PC-3 (cell line): ENCODE measurements at regions of chr21 and their contacts with region 1.

Region 1: GRCh38 chr21:35882791-35883240 is 177.5 kb downstream of the SETD4 start:
- DNase-seq: no peak
- ATAC-seq: no peak
- H3K4me3 ChIP-seq: no peak overlapping the region
- H3K27ac ChIP-seq: no peak overlapping the region
- H3K4me1 ChIP-seq: no peaks in the 10 kb centered on the region
- H3K27me3 ChIP-seq: peaks cover 38% of the 10 kb centered on the region
- CTCF ChIP-seq: no peak

Region 2: DNA sequence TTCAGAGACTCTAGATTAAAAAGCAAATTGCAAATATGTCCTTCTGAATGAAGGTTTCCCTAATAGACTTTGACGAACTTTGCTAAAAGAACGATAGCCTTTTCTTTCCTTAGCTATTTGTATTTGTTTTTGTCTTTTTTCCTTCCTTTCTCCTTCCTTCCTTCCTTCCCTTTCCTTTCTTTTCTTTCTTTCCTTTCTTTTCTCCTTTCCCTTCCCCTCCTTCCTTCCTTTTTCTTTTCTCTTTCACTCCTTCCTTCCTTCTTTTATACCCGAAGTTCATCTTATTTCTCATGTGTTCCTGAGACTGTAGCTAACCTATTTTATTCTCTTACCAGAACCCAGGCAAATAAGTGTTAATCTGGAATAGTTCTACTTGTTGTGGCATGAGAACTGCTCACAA is 452.6 kb before region 1 on chr21:
- CTCF ChIA-PET with region 1: interaction called, 13 read pairs
- POLR2A ChIA-PET with region 1: no interaction called
- intact Hi-C with region 1: no loop called
- DNase-seq: no peak
- ATAC-seq: no peak
- H3K4me3 ChIP-seq: no peak overlapping the region
- H3K27ac ChIP-seq: no peak overlapping the region
- H3K4me1 ChIP-seq: no peaks in the 10 kb centered on the region
- H3K27me3 ChIP-seq: no peaks in the 10 kb centered on the region
- CTCF ChIP-seq: no peak

Region 3: DNA sequence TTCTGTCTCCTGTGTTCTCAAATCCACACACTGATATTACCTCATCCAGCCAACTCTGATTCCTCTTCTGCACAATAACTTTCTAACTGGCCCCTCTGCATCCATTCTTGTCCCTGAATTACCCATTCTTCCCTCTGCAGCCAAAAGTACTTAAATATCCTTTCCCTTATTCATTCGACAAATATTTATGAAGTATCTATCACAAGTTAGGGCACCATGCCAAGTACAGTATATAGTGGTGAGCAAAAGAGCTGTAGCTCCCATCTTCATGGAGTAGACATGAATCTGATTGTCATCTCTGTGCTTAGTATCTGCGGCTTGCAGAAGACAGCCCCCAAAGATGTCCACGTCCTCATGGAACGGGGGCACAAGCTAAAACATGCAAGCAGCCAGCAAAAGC is 139.2 kb before region 1 on chr21:
- CTCF ChIA-PET with region 1: no interaction called
- POLR2A ChIA-PET with region 1: no interaction called
- intact Hi-C with region 1: no loop called
- DNase-seq: peak; percentile 86
- ATAC-seq: peak; percentile 20; the same call in 1 of the 2 replicates
- H3K4me3 ChIP-seq: no peak overlapping the region
- H3K27ac ChIP-seq: peak overlapping the region; percentile 26; the same call in 1 of the 2 replicates
- H3K4me1 ChIP-seq: peaks cover 39% of the 10 kb centered on the region
- H3K27me3 ChIP-seq: no peaks in the 10 kb centered on the region
- CTCF ChIP-seq: no peak

Region 4: GRCh38 chr21:35768187-35768586 is 114.6 kb before region 1 on chr21:
- CTCF ChIA-PET with region 1: no interaction called
- POLR2A ChIA-PET with region 1: no interaction called
- intact Hi-C with region 1: no loop called
- DNase-seq: no peak
- ATAC-seq: no peak
- H3K4me3 ChIP-seq: no peak overlapping the region
- H3K27ac ChIP-seq: no peak overlapping the region
- H3K4me1 ChIP-seq: no peaks in the 10 kb centered on the region
- H3K27me3 ChIP-seq: no peaks in the 10 kb centered on the region
- CTCF ChIP-seq: no peak

Region 5: GRCh38 chr21:35932232-35932911 is 49.6 kb after region 1 on chr21:
- CTCF ChIA-PET with region 1: no interaction called
- POLR2A ChIA-PET with region 1: no interaction called
- intact Hi-C with region 1: loop called (anchors 5 kb)
- DNase-seq: peak; percentile 90
- ATAC-seq: peak; percentile 85
- H3K4me3 ChIP-seq: peak overlapping the region; percentile 29; the same call in 1 of the 2 replicates
- H3K27ac ChIP-seq: peak overlapping the region; percentile 64
- H3K4me1 ChIP-seq: peaks cover 25% of the 10 kb centered on the region
- H3K27me3 ChIP-seq: no peaks in the 10 kb centered on the region
- CTCF ChIP-seq: no peak

Region 6: DNA sequence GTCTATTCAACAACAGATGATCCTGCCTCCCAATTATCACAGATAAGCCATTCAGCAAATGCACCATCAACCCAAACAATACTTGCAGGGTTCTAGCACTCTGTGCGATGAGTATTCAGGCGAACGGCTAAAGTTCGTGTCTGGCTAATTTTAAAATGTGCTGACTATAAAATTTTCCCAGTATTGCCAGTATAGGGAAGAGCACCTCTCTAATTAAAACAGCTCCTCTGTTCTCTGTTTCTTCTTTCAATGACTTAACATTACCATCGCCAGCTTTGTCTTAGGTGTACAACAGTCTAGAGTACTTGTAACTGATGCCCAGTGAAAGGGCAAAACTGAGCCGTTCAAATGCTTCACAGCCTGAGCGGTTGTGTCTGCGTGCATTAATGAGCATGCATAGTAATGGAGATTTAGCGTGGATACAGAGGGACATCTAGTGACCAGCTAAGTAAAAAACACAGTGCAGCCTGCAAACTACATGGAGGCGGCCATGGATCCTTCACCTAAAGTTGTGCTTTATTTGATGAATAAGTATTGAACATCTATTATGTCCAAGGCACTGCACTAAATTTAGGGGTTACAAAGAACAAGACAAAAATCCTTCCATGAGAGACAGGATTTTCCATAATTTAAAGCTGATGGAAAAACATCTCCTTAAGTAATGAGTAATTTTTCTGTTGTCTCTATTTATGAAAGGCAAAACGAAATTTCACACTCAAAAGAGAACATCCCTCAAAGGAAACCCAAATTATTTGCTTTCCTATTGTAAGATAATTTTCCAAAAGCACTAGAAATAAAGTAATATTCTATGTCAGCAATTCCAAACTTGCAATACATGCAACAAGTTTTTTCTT is 57.5 kb after region 1 on chr21:
- CTCF ChIA-PET with region 1: no interaction called
- POLR2A ChIA-PET with region 1: no interaction called
- intact Hi-C with region 1: loop called (anchors 2 kb)
- DNase-seq: peak; percentile 86
- ATAC-seq: peak; percentile 99
- H3K4me3 ChIP-seq: no peak overlapping the region
- H3K27ac ChIP-seq: no peak overlapping the region
- H3K4me1 ChIP-seq: peaks cover 4% of the 10 kb centered on the region
- H3K27me3 ChIP-seq: no peaks in the 10 kb centered on the region
- CTCF ChIP-seq: peak; percentile 91

Region 7: GRCh38 chr21:36028127-36029069 is 145.6 kb after region 1 on chr21:
- CTCF ChIA-PET with region 1: no interaction called
- POLR2A ChIA-PET with region 1: no interaction called
- intact Hi-C with region 1: loop called (anchors 5 kb)
- DNase-seq: peak; percentile 89
- ATAC-seq: peak; percentile 97
- H3K4me3 ChIP-seq: no peak overlapping the region
- H3K27ac ChIP-seq: no peak overlapping the region
- H3K4me1 ChIP-seq: no peaks in the 10 kb centered on the region
- H3K27me3 ChIP-seq: no peaks in the 10 kb centered on the region
- CTCF ChIP-seq: peak; percentile 97